AG04449 (cell line): ENCODE measurements at regions of chr9 and their contacts with region 1.

Region 1: GRCh38 chr9:110217656-110218099 is 9.7 kb upstream of the C9orf152 start:
- DNase-seq: no peak
- H3K4me3 ChIP-seq: no peak overlapping the region
- CTCF ChIP-seq: peak; percentile 44

Region 2: DNA sequence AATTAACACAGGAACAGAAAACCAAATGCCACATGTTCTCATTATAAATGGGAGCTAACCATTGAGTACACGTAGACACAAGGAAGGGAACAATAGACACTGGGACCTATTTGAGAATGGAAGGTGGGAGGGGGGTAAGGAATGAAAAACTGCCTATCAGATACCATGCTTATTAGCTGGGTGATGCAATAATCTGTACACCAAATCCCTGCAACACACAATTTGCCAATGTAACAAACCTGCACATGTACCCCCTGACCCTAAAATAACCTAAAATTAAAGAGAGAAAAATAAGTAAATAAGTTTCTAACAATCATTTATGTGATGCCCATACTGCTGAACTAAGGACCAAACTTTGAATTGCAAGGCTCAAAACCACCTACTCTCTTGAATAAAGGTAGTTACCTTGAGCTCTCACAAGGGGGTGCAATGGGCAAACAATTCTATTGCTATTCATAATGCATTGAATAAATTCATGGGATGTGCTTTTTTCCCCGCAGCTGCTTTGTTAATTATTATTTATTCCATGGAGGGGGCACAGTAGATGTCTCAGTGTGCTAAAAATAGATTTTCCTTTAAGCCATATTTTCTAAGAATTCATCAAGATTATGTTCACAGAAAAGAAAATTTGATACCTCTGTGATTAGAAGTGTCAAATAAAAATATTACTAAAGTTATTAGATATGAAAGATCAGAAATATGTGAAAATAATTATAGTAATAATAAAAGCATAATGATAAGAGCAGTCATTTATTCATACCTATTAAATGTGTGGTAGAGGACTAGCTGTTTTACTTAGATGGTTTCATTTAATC is 643.4 kb before region 1 on chr9:
- CTCF ChIA-PET with region 1: interaction called, 23 read pairs
- POLR2A ChIA-PET with region 1: no interaction called
- DNase-seq: peak; percentile 3
- H3K4me3 ChIP-seq: no peak overlapping the region
- CTCF ChIP-seq: peak; percentile 62

Region 3: DNA sequence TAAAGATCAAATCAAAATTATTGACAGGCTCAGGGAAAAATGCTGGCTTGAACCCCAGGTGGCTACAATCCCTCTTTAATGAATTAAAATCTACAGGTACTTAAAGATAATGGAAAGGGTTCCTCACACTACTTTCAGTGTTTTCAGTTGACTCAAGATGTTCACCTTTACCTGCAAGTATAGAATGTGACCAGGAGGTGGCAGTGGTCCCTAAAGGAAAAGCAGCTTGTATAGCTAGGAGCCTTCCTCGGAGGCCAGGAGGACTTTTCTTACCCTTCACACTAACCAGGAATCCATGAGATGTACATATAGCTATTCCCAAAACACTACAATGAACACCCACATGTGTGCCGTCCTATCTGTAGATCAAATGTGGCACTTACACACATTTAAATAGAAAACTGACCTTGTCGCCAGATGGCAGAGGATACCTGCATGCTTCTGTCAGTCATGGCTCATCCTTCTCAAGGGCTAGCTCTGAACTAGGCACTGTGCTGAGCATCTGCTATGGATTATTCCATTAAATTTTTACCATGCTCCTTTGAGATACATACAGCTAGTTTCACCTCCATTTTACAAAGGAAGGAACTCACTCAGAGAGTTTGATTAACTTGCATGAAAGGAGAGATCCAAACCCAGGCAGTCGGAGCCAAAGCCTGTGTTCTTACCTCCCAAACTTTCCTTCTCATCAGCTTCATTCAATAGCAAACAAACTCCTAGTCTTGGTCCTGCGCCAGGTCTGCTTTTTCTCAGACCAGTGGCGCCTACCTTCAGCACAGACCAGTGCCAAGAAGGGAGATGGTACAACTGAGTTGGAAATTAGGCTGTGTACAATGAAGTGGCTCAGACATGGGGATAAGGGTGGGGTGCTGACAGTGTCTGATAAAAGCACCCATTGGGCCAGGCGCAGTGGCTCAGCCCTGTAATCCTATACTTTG is 34.2 kb before region 1 on chr9:
- CTCF ChIA-PET with region 1: interaction called, 534 read pairs
- POLR2A ChIA-PET with region 1: no interaction called
- DNase-seq: peak; percentile 12
- H3K4me3 ChIP-seq: no peak overlapping the region
- CTCF ChIP-seq: peak; percentile 74

Region 4: DNA sequence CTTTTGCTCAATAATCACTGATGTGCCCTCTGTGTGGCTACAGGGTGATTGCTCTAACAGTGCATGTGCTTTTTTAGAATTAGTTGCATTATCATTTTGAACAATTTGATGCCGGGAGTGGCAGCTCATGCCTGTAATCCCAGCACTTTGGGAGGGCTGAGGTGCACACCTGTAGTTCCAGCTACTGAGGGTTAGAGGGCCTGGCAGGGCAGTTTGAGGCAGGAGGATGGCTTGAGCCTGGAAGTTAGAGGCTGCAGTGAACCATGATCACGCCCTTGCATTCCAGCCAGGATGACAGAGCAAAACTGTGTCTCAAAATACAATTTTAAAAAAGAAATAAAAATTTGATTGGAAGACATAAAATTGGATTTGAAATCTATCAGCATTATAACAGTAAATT is 11.3 kb after region 1 on chr9:
- CTCF ChIA-PET with region 1: interaction called, 32 read pairs
- POLR2A ChIA-PET with region 1: no interaction called
- DNase-seq: no peak
- H3K4me3 ChIP-seq: no peak overlapping the region
- CTCF ChIP-seq: no peak